Naive thymus-derived CD4-positive, alpha-beta T cell (primary cell): ENCODE measurements at regions of chr5 and their contacts with region 1.

Region 1: DNA sequence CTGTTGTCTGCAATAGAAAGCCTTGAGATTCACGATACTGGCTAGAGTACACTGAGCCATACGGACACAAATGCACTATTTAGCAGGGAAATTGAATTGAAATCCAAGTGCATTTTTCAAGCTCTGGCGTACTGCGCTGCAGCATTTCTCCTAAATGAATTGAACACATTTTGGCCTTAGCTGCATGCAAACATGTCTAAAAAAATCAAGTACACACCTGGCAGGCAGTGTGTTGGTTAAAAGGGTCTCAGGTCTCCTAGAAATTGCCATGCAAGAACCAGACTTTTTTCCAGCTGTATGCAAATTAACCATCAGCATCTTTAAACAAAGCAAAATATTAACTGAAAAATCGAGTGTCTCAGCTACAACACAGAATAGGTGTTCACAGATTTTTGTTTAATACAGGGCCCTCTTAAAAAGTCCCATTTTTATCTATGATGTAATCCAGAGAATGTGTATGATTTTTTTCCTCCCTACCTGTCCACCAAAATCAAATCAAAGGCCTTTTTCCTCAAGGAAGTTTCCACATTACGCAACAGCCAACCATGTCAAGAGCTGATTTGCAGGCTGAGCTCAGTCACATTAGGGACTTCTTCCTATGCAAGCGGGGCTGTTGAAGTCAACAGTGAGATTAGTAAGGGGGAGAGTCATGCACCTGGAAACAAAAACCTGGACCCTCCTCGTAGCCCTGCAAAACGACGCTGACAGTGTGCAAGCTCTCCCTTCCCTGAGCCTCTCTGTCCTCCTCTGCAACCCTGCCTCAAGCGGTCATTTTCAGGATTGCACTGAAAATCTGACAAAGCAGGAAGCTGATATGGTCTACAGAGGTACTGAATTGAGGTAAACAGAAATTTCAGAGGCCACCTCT is 14.1 kb upstream of the SFXN1 start:
- DNase-seq: peak; percentile 28 to 66 (median 61)
- ATAC-seq: peak; percentile 93
- H3K4me3 ChIP-seq: no peak overlapping the region
- H3K4me3 Mint-ChIP-seq: peak overlapping the region in 9 of 10 donors; percentile 2 to 77 (median 42)
- H3K27ac ChIP-seq: no peak overlapping the region
- H3K27ac Mint-ChIP-seq: peak overlapping the region in 7 of 9 donors; percentile 4 to 82 (median 19)
- H3K4me1 ChIP-seq: peaks cover 0 to 8% of the 10 kb centered on the region in 2 donors
- H3K4me1 Mint-ChIP-seq: peaks cover 5 to 24% (median 15%) of the 10 kb centered on the region in 7 donors
- H3K27me3 ChIP-seq: no peaks in the 10 kb centered on the region
- H3K27me3 Mint-ChIP-seq: peaks cover 0 to 3% (median 0%) of the 10 kb centered on the region in 5 donors

Region 2: GRCh38 chr5:174910245-174910737 is 554.0 kb before region 1 on chr5:
- CTCF ChIA-PET with region 1: no interaction called
- POLR2A ChIA-PET with region 1: no interaction called
- intact Hi-C with region 1: no loop called
- DNase-seq: peak; percentile 2 to 61 (median 20)
- ATAC-seq: peak; percentile 75
- H3K4me3 ChIP-seq: no peak overlapping the region
- H3K4me3 Mint-ChIP-seq: peak overlapping the region in 1 of 10 donors; percentile 24
- H3K27ac ChIP-seq: no peak overlapping the region
- H3K27ac Mint-ChIP-seq: no peak overlapping the region
- H3K4me1 ChIP-seq: no peaks in the 10 kb centered on the region
- H3K4me1 Mint-ChIP-seq: peaks cover 0 to 5% (median 0%) of the 10 kb centered on the region in 7 donors
- H3K27me3 ChIP-seq: peaks cover 0 to 4% of the 10 kb centered on the region in 2 donors
- H3K27me3 Mint-ChIP-seq: peaks cover 20 to 74% (median 55%) of the 10 kb centered on the region in 5 donors

Region 3: GRCh38 chr5:174951146-174951780 is 513.0 kb before region 1 on chr5:
- CTCF ChIA-PET with region 1: interaction called, 4 read pairs
- POLR2A ChIA-PET with region 1: no interaction called
- intact Hi-C with region 1: loop called (anchors 1 to 5 kb)
- DNase-seq: peak in 8 of 9 donors; percentile 6 to 60 (median 46)
- ATAC-seq: peak; percentile 68
- H3K4me3 ChIP-seq: no peak overlapping the region
- H3K4me3 Mint-ChIP-seq: no peak overlapping the region
- H3K27ac ChIP-seq: no peak overlapping the region
- H3K27ac Mint-ChIP-seq: peak overlapping the region in 1 of 9 donors; percentile 28
- H3K4me1 ChIP-seq: no peaks in the 10 kb centered on the region
- H3K4me1 Mint-ChIP-seq: no peaks in the 10 kb centered on the region
- H3K27me3 ChIP-seq: no peaks in the 10 kb centered on the region
- H3K27me3 Mint-ChIP-seq: peaks cover 0 to 23% (median 13%) of the 10 kb centered on the region in 5 donors

Region 4: GRCh38 chr5:175478384-175479124 is 14.2 kb after region 1 on chr5 and contains the start of gene SFXN1:
- CTCF ChIA-PET with region 1: interaction called, 13 read pairs
- POLR2A ChIA-PET with region 1: interaction called, 9 read pairs
- intact Hi-C with region 1: loop called (anchors 1 kb)
- DNase-seq: peak; percentile 56 to 90 (median 76)
- ATAC-seq: peak; percentile 82
- H3K4me3 ChIP-seq: peak within 1 kb of the TSS; percentile 93
- H3K4me3 Mint-ChIP-seq: peak within 1 kb of the TSS; percentile 95 to 98 (median 98)
- H3K27ac ChIP-seq: peak within 1 kb of the TSS; percentile 72
- H3K27ac Mint-ChIP-seq: peak within 1 kb of the TSS; percentile 71 to 98 (median 95)
- H3K4me1 ChIP-seq: peaks cover 29 to 34% of the 10 kb centered on the region in 2 donors
- H3K4me1 Mint-ChIP-seq: peaks cover 33 to 64% (median 54%) of the 10 kb centered on the region in 7 donors
- H3K27me3 ChIP-seq: no peaks in the 10 kb centered on the region
- H3K27me3 Mint-ChIP-seq: peaks cover 0 to 19% (median 4%) of the 10 kb centered on the region in 5 donors
- total RNA-seq, gene SFXN1: 58.7 to 177 (median 88.9) TPM

Region 5: GRCh38 chr5:175501759-175502339 is 37.5 kb after region 1 on chr5:
- CTCF ChIA-PET with region 1: interaction called, 4 read pairs
- POLR2A ChIA-PET with region 1: no interaction called
- intact Hi-C with region 1: loop called in 1 of 2 experiments (anchors 1 kb)
- DNase-seq: no peak
- ATAC-seq: no peak
- H3K4me3 ChIP-seq: no peak overlapping the region
- H3K4me3 Mint-ChIP-seq: no peak overlapping the region
- H3K27ac ChIP-seq: no peak overlapping the region
- H3K27ac Mint-ChIP-seq: peak overlapping the region in 7 of 9 donors; percentile 4 to 76 (median 64)
- H3K4me1 ChIP-seq: no peaks in the 10 kb centered on the region
- H3K4me1 Mint-ChIP-seq: peaks cover 0 to 53% (median 41%) of the 10 kb centered on the region in 7 donors
- H3K27me3 ChIP-seq: no peaks in the 10 kb centered on the region
- H3K27me3 Mint-ChIP-seq: no peaks in the 10 kb centered on the region

Region 6: DNA sequence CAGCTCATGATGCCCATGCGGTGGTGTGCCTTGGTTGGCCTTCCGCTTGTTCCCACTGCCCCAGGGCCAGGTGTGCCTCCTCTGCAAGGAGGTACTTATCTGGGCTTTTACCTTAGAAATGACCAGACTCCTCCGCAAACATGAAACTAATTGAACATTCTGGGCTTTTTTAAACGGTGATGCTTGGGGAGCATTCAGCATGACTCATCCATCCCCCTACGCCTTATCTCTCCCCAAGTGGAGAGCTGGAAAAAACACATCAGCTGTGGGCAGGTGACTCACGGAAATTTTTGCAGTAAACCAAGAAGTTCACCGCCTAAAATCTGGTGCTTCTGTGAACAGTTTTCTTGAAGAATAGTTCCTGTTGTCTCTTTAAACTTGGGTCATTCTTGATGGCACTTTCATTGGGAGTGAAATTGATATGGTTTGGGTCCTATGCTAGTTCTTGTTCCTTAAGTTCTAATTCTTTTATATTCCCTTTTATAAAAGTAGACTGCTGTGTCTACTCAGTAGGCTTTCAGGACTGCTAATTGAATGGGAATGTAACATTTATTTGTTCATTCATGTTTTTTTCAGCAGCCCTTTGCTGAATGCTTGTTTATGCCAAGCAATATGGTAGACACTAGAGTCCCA is 53.6 kb after region 1 on chr5:
- CTCF ChIA-PET with region 1: no interaction called
- POLR2A ChIA-PET with region 1: interaction called, 3 read pairs
- intact Hi-C with region 1: loop called in 1 of 2 experiments (anchors 1 kb)
- DNase-seq: peak in 2 of 9 donors; percentile 62 to 81
- ATAC-seq: no peak
- H3K4me3 ChIP-seq: no peak overlapping the region
- H3K4me3 Mint-ChIP-seq: peak overlapping the region; percentile 26 to 80 (median 54)
- H3K27ac ChIP-seq: peak overlapping the region; percentile 22
- H3K27ac Mint-ChIP-seq: peak overlapping the region; percentile 60 to 97 (median 93)
- H3K4me1 ChIP-seq: peaks cover 44 to 50% of the 10 kb centered on the region in 2 donors
- H3K4me1 Mint-ChIP-seq: peaks cover 47 to 87% (median 76%) of the 10 kb centered on the region in 7 donors
- H3K27me3 ChIP-seq: no peaks in the 10 kb centered on the region
- H3K27me3 Mint-ChIP-seq: no peaks in the 10 kb centered on the region